Endothelial cell of umbilical vein (primary cell): ENCODE measurements at regions of chr10 and their contacts with region 1.

Region 1: GRCh38 chr10:61903221-61903927 is 1.9 kb downstream of the ARID5B start:
- DNase-seq: no peak
- H3K4me3 ChIP-seq: peak overlapping the region; percentile 26 to 79 (median 65)
- H3K27ac ChIP-seq: peak overlapping the region; percentile 59
- H3K4me1 ChIP-seq: peaks cover 28% of the 10 kb centered on the region
- H3K27me3 ChIP-seq: no peaks in the 10 kb centered on the region
- CTCF ChIP-seq: peak; percentile 5 to 18
- POLR2A ChIP-seq: no peak

Region 2: GRCh38 chr10:60827791-60828488 is 1075.4 kb before region 1 on chr10:
- CTCF ChIA-PET with region 1: interaction called, 3 read pairs
- POLR2A ChIA-PET with region 1: no interaction called
- dilution Hi-C with region 1: no loop called
- intact Hi-C with region 1: loop called (anchors 1 kb)
- DNase-seq: peak; percentile 98
- H3K4me3 ChIP-seq: peak overlapping the region in 1 of 3 experiments; percentile 39
- H3K27ac ChIP-seq: peak overlapping the region; percentile 98
- H3K4me1 ChIP-seq: peaks cover 32% of the 10 kb centered on the region
- H3K27me3 ChIP-seq: no peaks in the 10 kb centered on the region
- CTCF ChIP-seq: no peak
- POLR2A ChIP-seq: no peak

Region 3: DNA sequence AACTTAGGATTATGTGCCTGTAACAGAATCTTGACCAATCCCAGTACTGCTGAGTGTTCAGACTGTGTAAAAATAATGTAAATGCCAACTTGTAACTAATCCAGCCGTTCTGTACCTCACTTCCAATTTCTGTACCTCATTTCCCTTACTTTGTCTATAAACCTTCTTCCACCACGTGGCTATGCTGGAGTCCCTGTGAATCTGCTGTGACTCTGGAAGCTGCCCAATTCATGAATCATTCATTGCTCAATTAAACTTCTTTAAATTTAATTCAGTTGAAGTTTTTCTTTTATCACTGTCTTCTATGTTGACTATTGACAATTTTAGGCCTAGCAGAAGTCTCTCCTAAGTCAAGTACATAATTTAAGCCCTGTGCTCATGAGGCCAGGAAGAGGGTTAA is 744.1 kb before region 1 on chr10:
- CTCF ChIA-PET with region 1: no interaction called
- POLR2A ChIA-PET with region 1: no interaction called
- dilution Hi-C with region 1: no loop called
- intact Hi-C with region 1: no loop called
- DNase-seq: no peak
- H3K4me3 ChIP-seq: no peak overlapping the region
- H3K27ac ChIP-seq: no peak overlapping the region
- H3K4me1 ChIP-seq: no peaks in the 10 kb centered on the region
- H3K27me3 ChIP-seq: no peaks in the 10 kb centered on the region
- CTCF ChIP-seq: no peak
- POLR2A ChIP-seq: no peak

Region 4: GRCh38 chr10:61356342-61356741 is 547.0 kb before region 1 on chr10:
- CTCF ChIA-PET with region 1: no interaction called
- POLR2A ChIA-PET with region 1: no interaction called
- dilution Hi-C with region 1: no loop called
- intact Hi-C with region 1: no loop called
- DNase-seq: no peak
- H3K4me3 ChIP-seq: no peak overlapping the region
- H3K27ac ChIP-seq: no peak overlapping the region
- H3K4me1 ChIP-seq: no peaks in the 10 kb centered on the region
- H3K27me3 ChIP-seq: peaks cover 0 to 2% of the 10 kb centered on the region in 2 experiments
- CTCF ChIP-seq: no peak
- POLR2A ChIP-seq: no peak

Region 5: DNA sequence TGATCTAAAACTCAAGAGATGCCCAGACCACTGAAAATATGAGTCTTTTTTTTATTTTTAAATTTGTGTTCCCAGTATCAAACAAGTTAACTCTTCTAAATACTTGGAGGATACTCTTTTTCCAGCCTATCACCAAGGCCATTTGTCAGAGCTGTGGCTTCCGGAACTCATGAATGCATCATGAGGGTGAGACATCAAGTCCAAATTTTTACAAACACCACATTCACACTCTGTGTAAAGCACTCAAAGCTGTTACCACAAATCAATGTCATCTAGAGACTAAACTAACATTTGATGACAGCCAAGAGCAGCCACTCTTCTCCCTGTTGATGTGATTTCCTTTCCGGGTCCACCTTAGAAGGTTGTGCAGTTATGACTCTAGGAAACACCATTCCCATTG is 45.6 kb before region 1 on chr10:
- CTCF ChIA-PET with region 1: no interaction called
- POLR2A ChIA-PET with region 1: no interaction called
- dilution Hi-C with region 1: no loop called
- intact Hi-C with region 1: no loop called
- DNase-seq: no peak
- H3K4me3 ChIP-seq: no peak overlapping the region
- H3K27ac ChIP-seq: no peak overlapping the region
- H3K4me1 ChIP-seq: no peaks in the 10 kb centered on the region
- H3K27me3 ChIP-seq: no peaks in the 10 kb centered on the region
- CTCF ChIP-seq: no peak
- POLR2A ChIP-seq: no peak

Region 6: DNA sequence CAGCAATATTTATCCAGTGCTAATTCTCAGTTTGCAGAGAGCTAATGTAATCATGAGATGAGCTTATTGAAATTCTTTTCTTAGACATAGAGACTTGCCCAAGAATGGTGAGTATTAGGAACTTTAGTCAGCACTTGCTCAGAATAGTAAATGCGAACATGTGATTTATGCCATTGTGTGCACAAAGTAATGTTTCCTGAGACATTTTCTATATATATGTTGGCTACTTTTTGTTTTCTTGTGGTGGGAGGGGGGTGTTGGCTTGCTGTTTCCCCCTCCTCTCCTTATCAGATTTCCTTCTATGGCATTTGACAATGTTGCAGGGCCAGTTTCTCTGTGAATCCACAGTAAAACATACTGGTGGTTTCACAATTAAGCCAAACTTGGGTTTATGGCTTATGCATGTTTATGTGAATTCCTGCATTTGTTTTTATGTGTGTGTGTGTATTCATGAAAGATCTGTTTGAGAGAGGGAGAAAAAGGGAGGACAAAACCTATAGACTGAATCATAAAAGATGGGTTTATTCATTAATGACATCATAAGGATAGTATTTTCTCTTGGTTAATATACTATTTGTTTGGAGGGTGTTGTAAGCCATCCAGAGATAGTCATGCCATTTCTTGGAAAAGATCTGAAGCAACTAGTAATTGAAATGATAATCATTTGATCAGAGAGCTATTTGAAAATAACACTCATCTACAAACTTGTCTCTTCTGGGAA is 34.4 kb after region 1 on chr10:
- CTCF ChIA-PET with region 1: interaction called, 22 read pairs
- POLR2A ChIA-PET with region 1: no interaction called
- dilution Hi-C with region 1: no loop called
- intact Hi-C with region 1: loop called (anchors 1 kb)
- DNase-seq: peak; percentile 79
- H3K4me3 ChIP-seq: peak overlapping the region in 1 of 3 experiments; percentile 0
- H3K27ac ChIP-seq: peak overlapping the region; percentile 20
- H3K4me1 ChIP-seq: peaks cover 36% of the 10 kb centered on the region
- H3K27me3 ChIP-seq: no peaks in the 10 kb centered on the region
- CTCF ChIP-seq: no peak
- POLR2A ChIP-seq: no peak

Region 7: GRCh38 chr10:61974601-61975390 is 71.4 kb after region 1 on chr10:
- CTCF ChIA-PET with region 1: no interaction called
- POLR2A ChIA-PET with region 1: no interaction called
- dilution Hi-C with region 1: no loop called
- intact Hi-C with region 1: loop called (anchors 2 kb)
- DNase-seq: peak; percentile 78
- H3K4me3 ChIP-seq: no peak overlapping the region
- H3K27ac ChIP-seq: no peak overlapping the region
- H3K4me1 ChIP-seq: peaks cover 26% of the 10 kb centered on the region
- H3K27me3 ChIP-seq: no peaks in the 10 kb centered on the region
- CTCF ChIP-seq: no peak
- POLR2A ChIP-seq: no peak

Region 8: DNA sequence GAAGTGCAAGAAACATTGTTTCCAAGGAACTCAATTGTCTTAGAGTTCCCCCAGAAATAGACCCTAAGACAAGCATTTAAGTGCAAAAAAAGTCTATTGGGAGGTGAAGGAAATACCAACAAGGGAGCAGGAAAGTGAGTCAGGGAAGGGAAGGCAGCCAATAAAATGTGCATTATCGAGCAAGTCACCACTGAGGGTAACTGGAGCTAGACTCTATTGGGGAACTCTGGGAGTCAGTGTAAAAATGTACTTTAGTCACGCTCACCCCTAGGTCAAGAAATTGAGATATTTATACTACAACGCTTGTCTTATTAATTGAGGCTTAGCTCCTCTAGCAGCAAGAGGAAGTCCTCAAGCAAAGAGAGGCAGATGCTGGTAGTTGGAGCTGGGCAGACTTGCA is 227.6 kb after region 1 on chr10:
- CTCF ChIA-PET with region 1: no interaction called
- POLR2A ChIA-PET with region 1: no interaction called
- dilution Hi-C with region 1: no loop called
- intact Hi-C with region 1: loop called (anchors 1 kb)
- DNase-seq: peak; percentile 99
- H3K4me3 ChIP-seq: no peak overlapping the region
- H3K27ac ChIP-seq: peak overlapping the region; percentile 78
- H3K4me1 ChIP-seq: peaks cover 29% of the 10 kb centered on the region
- H3K27me3 ChIP-seq: no peaks in the 10 kb centered on the region
- CTCF ChIP-seq: no peak
- POLR2A ChIP-seq: peak; percentile 51

Region 9: DNA sequence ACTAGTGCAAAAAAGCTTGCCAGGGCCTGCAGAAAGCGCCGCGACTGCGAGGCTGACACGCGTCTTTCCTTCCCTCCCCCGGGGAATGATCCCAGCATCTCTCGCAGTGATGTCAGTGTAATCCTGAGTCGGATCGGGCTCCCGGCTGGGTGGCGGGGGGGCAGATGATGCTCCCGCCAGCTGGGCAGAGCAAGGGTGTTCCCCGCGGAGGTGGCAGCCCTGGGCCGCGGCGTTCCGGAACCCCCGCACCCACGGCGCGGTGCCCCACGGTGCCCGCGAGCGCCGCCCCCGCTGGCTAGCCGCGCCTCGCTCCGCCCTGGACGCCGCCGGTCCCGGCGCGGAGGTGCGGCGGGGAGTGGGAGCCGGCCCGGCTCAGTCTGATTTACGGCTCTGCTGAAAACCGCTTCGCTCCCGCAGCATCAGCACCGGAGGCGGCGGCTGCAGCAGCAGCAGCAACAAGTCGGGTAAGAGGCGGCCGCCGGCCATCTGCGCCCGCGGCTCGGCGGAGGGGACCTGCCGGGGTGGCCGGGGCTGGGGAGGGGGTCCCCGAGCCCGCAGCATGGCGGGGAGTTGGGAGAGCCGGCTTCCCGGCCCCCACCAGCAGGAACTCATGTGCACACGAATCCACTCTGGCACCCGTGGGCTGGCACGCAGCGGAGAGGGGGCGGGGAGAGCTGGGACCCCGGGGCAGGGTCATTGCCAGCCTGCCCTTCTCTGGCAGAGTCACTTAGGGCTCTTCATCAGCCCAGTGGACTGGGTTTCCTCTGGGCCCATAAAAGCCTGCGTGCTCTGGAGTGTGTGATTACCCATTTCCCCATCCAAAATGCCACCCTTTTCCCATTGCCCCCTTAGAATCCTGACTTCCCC is 470.9 kb after region 1 on chr10 and contains the start of gene ZNF365:
- CTCF ChIA-PET with region 1: no interaction called
- POLR2A ChIA-PET with region 1: no interaction called
- dilution Hi-C with region 1: no loop called
- intact Hi-C with region 1: loop called (anchors 5 kb)
- DNase-seq: no peak
- H3K4me3 ChIP-seq: peak within 1 kb of the TSS; percentile 39 to 52 (median 51)
- H3K27ac ChIP-seq: peak within 1 kb of the TSS; percentile 5
- H3K4me1 ChIP-seq: peaks cover 16% of the 10 kb centered on the region
- H3K27me3 ChIP-seq: no peaks in the 10 kb centered on the region
- CTCF ChIP-seq: no peak
- POLR2A ChIP-seq: no peak
- total RNA-seq, gene ZNF365: 2.9 and 5.5 TPM in 2 replicates